PC-9 (cell line): ENCODE measurements at regions of chr19 and their contacts with region 1.

Region 1: GRCh38 chr19:3721131-3721886 is 13.1 kb downstream of the TJP3 start:
- DNase-seq: peak; percentile 82 to 96
- H3K4me3 ChIP-seq: peak overlapping the region; percentile 65
- H3K27ac ChIP-seq: no peak overlapping the region
- H3K4me1 ChIP-seq: peaks cover 16% of the 10 kb centered on the region; the same call in 1 of the 2 replicates
- H3K27me3 ChIP-seq: no peaks in the 10 kb centered on the region
- CTCF ChIP-seq: no peak

Region 2: DNA sequence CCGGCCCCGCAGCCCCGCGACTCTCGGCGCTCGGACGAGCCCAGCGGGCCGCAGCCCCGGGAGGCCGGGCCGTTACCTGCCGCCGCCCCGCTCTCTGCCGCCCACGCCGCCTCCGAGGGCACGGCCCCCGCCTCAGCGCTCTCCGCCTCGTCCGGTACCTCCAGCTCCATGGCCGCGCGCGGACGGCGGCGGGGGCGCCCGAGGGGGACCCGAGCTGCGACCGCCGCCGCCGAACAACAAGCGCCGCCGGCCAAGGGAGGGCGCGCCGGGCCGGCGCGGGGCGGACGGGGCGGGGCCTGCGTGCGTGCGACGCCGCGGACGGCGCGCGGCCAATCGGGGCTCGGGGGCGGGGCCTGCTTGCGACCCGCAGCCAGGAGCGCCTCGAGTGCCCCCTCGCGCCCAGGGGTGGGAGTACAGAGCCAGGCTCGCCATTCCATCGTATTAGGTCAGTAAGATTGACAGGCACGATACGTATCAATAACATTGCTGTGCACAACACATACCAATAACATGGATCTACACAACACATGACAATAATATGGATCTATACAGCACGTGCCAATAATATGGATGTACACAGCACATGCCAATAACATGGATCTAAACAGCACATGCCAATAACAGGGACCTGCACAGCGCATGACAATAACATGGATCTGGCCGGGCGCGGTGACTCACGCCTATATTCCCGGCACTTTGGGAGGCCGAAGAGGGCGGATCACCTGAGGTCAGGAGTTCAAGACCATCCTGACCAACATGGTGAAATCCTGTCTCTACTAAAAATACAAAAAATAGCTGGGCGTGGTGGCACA is 20.9 kb before region 1 on chr19 and contains the start of gene PIP5K1C:
- CTCF ChIA-PET with region 1: interaction called, 4 read pairs
- POLR2A ChIA-PET with region 1: no interaction called
- intact Hi-C with region 1: loop called (anchors 1 kb)
- DNase-seq: peak; percentile 46 to 83
- H3K4me3 ChIP-seq: peak within 1 kb of the TSS; percentile 68
- H3K27ac ChIP-seq: no peak within 1 kb of the TSS
- H3K4me1 ChIP-seq: no peaks in the 10 kb centered on the region; the same call in 1 of the 2 replicates
- H3K27me3 ChIP-seq: no peaks in the 10 kb centered on the region
- CTCF ChIP-seq: peak; percentile 67
- total RNA-seq, gene PIP5K1C: 19.1 and 20.0 TPM in 2 replicates

Region 3: DNA sequence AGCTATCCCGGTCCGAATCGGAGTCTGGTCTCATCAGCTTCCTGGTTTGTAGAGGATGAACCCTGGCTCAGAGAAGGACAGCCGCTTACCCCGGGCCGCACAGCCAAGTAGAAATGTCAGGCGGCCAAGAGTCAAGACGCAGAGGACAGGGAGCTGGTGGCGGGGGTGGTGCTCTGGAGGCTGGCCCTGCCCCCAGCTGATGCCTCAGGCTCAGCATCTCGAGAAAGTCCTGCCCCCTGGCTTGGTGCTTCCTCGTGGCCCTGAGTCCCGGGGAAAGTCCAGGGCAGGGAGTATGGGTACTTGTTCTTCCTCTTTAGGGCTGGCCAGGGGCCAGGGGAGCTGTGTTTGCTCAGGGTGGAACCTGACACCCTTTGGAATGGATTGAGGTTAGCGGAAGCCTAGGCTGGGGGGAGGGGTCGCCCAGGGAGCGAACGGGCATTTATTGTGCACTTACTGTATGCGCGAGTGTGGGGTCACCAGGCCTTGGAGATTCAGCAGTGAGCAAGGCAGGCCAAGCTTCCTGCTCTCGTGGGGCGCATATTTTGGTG is 11.0 kb before region 1 on chr19:
- CTCF ChIA-PET with region 1: no interaction called
- POLR2A ChIA-PET with region 1: no interaction called
- intact Hi-C with region 1: loop called (anchors 1 kb)
- DNase-seq: peak; percentile 91
- H3K4me3 ChIP-seq: no peak overlapping the region
- H3K27ac ChIP-seq: no peak overlapping the region
- H3K4me1 ChIP-seq: peaks cover 31% of the 10 kb centered on the region
- H3K27me3 ChIP-seq: no peaks in the 10 kb centered on the region
- CTCF ChIP-seq: no peak